CD4-positive, alpha-beta T cell (primary cell): ENCODE measurements at regions of chr19 and their contacts with region 1.

Region 1: GRCh38 chr19:48795055-48795684 is 15.7 kb downstream of the BCAT2 start:
- DNase-seq: peak; percentile 72 to 93 (median 76)
- ATAC-seq: peak; percentile 97
- H3K4me3 ChIP-seq: peak overlapping the region; percentile 59
- H3K4me3 Mint-ChIP-seq: peak overlapping the region; percentile 96
- H3K27ac ChIP-seq: peak overlapping the region in 1 of 2 donors; percentile 23
- H3K27ac Mint-ChIP-seq: peak overlapping the region; percentile 90
- H3K4me1 ChIP-seq: peaks cover 14% of the 10 kb centered on the region
- H3K4me1 Mint-ChIP-seq: peaks cover 10% of the 10 kb centered on the region
- H3K27me3 ChIP-seq: no peaks in the 10 kb centered on the region
- H3K27me3 Mint-ChIP-seq: no peaks in the 10 kb centered on the region
- CTCF ChIP-seq: peak; percentile 99

Region 2: DNA sequence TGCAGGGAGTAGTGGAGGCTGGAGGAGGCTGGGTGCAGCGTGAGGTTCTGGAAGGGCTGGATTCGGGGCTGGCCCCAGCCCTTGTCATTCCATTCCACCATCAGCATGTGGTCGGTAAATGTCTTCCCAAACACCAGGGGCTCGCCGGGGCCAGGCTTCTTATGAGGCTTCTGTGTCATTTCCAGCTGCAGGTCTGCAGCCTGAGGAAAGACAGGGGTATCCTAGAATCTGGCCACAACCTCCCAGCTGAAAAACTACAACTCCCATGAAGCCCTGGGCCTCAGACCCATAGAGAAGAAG is 11.3 kb after region 1 on chr19:
- CTCF ChIA-PET with region 1: interaction called, 14 read pairs
- POLR2A ChIA-PET with region 1: interaction called, 11 read pairs
- intact Hi-C with region 1: no loop called
- DNase-seq: peak in 7 of 14 experiments; percentile 23 to 61 (median 27)
- ATAC-seq: peak; percentile 71
- H3K4me3 ChIP-seq: no peak overlapping the region
- H3K4me3 Mint-ChIP-seq: peak overlapping the region; percentile 80
- H3K27ac ChIP-seq: no peak overlapping the region
- H3K27ac Mint-ChIP-seq: no peak overlapping the region
- H3K4me1 ChIP-seq: peaks cover 24% of the 10 kb centered on the region
- H3K4me1 Mint-ChIP-seq: peaks cover 23% of the 10 kb centered on the region
- H3K27me3 ChIP-seq: no peaks in the 10 kb centered on the region
- H3K27me3 Mint-ChIP-seq: no peaks in the 10 kb centered on the region
- CTCF ChIP-seq: no peak

Region 3: GRCh38 chr19:48835734-48836088 is 40.5 kb after region 1 on chr19:
- CTCF ChIA-PET with region 1: interaction called, 13 read pairs
- POLR2A ChIA-PET with region 1: interaction called, 17 read pairs
- intact Hi-C with region 1: loop called (anchors 1 kb)
- DNase-seq: peak; percentile 88 to 98 (median 94)
- ATAC-seq: peak; percentile 88
- H3K4me3 ChIP-seq: peak overlapping the region; percentile 50
- H3K4me3 Mint-ChIP-seq: peak overlapping the region; percentile 92
- H3K27ac ChIP-seq: no peak overlapping the region
- H3K27ac Mint-ChIP-seq: peak overlapping the region; percentile 73
- H3K4me1 ChIP-seq: peaks cover 23% of the 10 kb centered on the region
- H3K4me1 Mint-ChIP-seq: peaks cover 22% of the 10 kb centered on the region
- H3K27me3 ChIP-seq: peaks cover 0 to 6% of the 10 kb centered on the region in 2 experiments
- H3K27me3 Mint-ChIP-seq: peaks cover 13% of the 10 kb centered on the region
- CTCF ChIP-seq: peak; percentile 80

Region 4: GRCh38 chr19:48842789-48843162 is 47.6 kb after region 1 on chr19:
- CTCF ChIA-PET with region 1: interaction called, 67 read pairs
- POLR2A ChIA-PET with region 1: interaction called, 10 read pairs
- intact Hi-C with region 1: loop called in 1 of 2 experiments (anchors 1 kb)
- DNase-seq: peak; percentile 9 to 79 (median 36)
- ATAC-seq: peak; percentile 68
- H3K4me3 ChIP-seq: no peak overlapping the region
- H3K4me3 Mint-ChIP-seq: no peak overlapping the region
- H3K27ac ChIP-seq: no peak overlapping the region
- H3K27ac Mint-ChIP-seq: no peak overlapping the region
- H3K4me1 ChIP-seq: no peaks in the 10 kb centered on the region
- H3K4me1 Mint-ChIP-seq: no peaks in the 10 kb centered on the region
- H3K27me3 ChIP-seq: no peaks in the 10 kb centered on the region
- H3K27me3 Mint-ChIP-seq: no peaks in the 10 kb centered on the region
- CTCF ChIP-seq: peak; percentile 77